ENCODE measurements at regions of chr7 and their contacts with region 1.

Region 1: DNA sequence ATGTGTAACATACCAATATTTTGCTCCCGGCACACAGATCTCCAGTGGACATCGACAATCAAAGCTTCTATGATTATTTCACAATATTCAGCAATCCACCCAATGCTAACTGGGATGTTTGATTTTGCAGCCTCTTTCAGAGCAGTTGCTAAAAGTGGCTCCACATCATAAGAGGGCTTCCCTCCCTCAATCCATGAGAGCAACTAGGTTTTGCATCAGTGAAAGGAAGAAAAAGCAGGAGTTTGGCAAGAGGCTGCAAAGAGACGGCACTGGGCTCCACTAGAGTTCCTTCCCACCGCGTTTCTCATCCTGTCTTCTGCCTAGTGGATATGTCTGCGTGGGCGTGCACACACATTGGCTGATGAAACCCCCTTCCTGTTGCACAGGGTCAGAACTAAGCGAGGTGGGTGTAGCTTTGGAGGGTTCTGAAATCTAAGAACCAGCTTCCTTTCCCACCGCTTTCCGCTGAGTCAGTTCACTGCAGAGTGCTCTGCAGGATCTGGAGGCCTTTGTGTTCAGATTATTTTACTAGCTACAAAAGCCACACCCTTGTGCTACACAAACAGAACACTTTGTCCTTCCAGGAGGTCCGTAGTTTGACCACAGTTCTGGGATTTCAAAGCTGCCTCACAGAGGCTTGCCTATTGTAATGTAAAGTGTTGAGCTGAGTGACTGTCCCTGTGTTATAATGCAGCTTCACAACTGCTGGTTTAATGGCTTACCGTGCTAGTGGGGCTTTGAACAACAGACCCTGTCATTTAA is 28.1 kb downstream of the ARL4A start:
- DNase-seq: peak; percentile 60 to 98
- ATAC-seq: peak; percentile 92 to 94
- H3K4me3 ChIP-seq: peak overlapping the region; percentile 44
- H3K27ac ChIP-seq: peak overlapping the region; percentile 91 to 96
- H3K4me1 ChIP-seq: peaks cover 73% of the 10 kb centered on the region
- CTCF ChIP-seq: no peak
- EP300 ChIP-seq: peak; percentile 24 to 75; a peak in 2 of 5 replicates
- POLR2A ChIP-seq: peak; percentile 40
- RAD21 ChIP-seq: peak in 1 of 2 experiments; percentile 49; a peak in 4 of 5 replicates

Region 2: GRCh38 chr7:12783421-12784095 is 68.0 kb after region 1 on chr7:
- CTCF ChIA-PET with region 1: no interaction called
- POLR2A ChIA-PET with region 1: no interaction called
- DNase-seq: no peak
- ATAC-seq: no peak
- H3K4me3 ChIP-seq: no peak overlapping the region
- H3K27ac ChIP-seq: no peak overlapping the region
- H3K4me1 ChIP-seq: 0 out of 3 replicates have a peak, but pooled peaks cover 4% of the 10 kb centered on the region
- CTCF ChIP-seq: no peak
- EP300 ChIP-seq: no peak
- POLR2A ChIP-seq: no peak
- RAD21 ChIP-seq: no peak

Region 3: DNA sequence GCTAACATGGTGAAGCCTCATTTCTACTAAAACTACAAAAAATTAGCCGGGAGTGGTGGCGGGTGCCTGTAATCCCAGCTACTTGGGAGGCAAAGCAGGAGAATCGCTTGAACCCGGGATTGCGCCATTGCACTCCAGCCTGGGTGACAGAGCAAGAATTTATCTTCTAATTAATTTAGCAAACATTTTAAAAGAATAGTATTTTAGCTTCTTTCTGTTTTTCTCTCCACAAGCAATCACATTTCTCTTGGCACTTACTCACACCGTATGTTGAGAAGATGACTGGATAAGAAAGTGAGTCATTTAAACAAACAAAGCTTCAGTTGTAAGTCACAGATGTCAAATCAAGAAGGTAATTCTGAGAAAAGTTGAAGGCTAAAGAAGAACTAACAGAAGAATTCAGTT is 235.8 kb after region 1 on chr7:
- CTCF ChIA-PET with region 1: no interaction called
- POLR2A ChIA-PET with region 1: interaction called, 11 read pairs
- DNase-seq: peak; percentile 61 to 62
- ATAC-seq: peak; percentile 68 to 80; a peak in 3 of 6 replicates
- H3K4me3 ChIP-seq: no peak overlapping the region
- H3K27ac ChIP-seq: peak overlapping the region in 1 of 2 experiments; percentile 70; a peak in 3 of 6 replicates
- H3K4me1 ChIP-seq: peaks cover 24% of the 10 kb centered on the region
- CTCF ChIP-seq: no peak
- EP300 ChIP-seq: no peak
- POLR2A ChIP-seq: no peak
- RAD21 ChIP-seq: 0 out of 5 replicates have a peak, but pooled peaks of 1 of the 2 experiments have one; percentile 25

Region 4: GRCh38 chr7:13017333-13017853 is 301.8 kb after region 1 on chr7:
- CTCF ChIA-PET with region 1: no interaction called
- POLR2A ChIA-PET with region 1: interaction called, 15 read pairs
- DNase-seq: peak; percentile 65 to 82
- ATAC-seq: peak; percentile 96 to 97
- H3K4me3 ChIP-seq: peak overlapping the region; percentile 24
- H3K27ac ChIP-seq: peak overlapping the region; percentile 84 to 90
- H3K4me1 ChIP-seq: peaks cover 26% of the 10 kb centered on the region
- CTCF ChIP-seq: no peak
- EP300 ChIP-seq: peak in 1 of 2 experiments; percentile 67; a peak in 2 of 5 replicates
- POLR2A ChIP-seq: no peak
- RAD21 ChIP-seq: peak in 1 of 2 experiments; percentile 14; a peak in 1 of 5 replicates